Sciatic nerve (tissue), 2 donors: ENCODE measurements at regions of chr7 and their contacts with region 1.

Region 1: GRCh38 chr7:146067880-146068279 is 48.7 kb upstream of the CNTNAP2 start:
- DNase-seq: no peak
- ATAC-seq: no peak

Region 2: GRCh38 chr7:146982482-146982881 is 914.6 kb after region 1 on chr7:
- intact Hi-C with region 1: loop called (anchors 10 kb)
- DNase-seq: no peak
- ATAC-seq: no peak